ENCODE measurements at regions of chr19 and their contacts with region 1.

Region 1: GRCh38 chr19:21328885-21329605 is at the start of gene ZNF708:
- DNase-seq: peak; percentile 91
- ATAC-seq: peak; percentile 99
- H3K4me3 Mint-ChIP-seq: peak within 1 kb of the TSS; percentile 99
- H3K27ac Mint-ChIP-seq: peak within 1 kb of the TSS; percentile 99
- H3K4me1 Mint-ChIP-seq: peaks cover 28% of the 10 kb centered on the region
- H3K27me3 Mint-ChIP-seq: no peaks in the 10 kb centered on the region
- total RNA-seq, gene ZNF708: 16.4 to 17.0 TPM

Region 2: DNA sequence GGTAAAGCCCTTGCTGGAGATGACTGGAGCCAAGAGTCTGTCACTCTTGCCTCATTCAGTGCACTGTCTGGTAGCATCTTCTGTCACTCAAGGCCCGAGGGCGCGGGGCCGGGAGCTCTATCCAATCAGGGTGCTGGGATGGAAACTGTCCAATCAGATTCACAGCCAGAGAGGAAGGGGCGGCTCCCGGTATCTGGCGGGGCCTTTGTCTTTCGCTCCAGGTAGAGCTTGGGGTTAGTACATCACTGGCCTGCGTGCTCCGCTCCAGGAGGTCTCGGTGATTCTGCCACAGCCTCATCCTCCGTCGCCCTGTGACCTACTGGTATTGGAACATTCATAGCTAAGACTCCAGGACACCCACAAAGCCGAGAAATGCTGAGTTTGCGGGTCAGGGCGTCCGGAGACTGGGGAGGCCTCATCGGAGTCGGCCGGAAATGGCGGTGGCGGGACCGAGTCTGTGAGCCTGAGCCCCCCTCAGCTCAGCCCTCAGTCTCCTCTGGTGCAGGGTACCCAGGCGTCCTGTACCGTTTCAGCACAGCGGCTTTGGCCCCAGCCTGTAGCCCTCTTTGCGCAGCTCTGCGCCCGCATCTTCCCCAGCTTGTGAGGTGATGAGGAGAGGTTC is 329.2 kb before region 1 on chr19:
- CTCF ChIA-PET with region 1: no interaction called
- POLR2A ChIA-PET with region 1: interaction called, 11 read pairs
- DNase-seq: peak; percentile 94
- ATAC-seq: peak; percentile 100
- H3K4me3 Mint-ChIP-seq: peak overlapping the region; percentile 95
- H3K27ac Mint-ChIP-seq: peak overlapping the region; percentile 96
- H3K4me1 Mint-ChIP-seq: peaks cover 27% of the 10 kb centered on the region
- H3K27me3 Mint-ChIP-seq: no peaks in the 10 kb centered on the region

Region 3: GRCh38 chr19:21314676-21315075 is 14.4 kb before region 1 on chr19:
- CTCF ChIA-PET with region 1: interaction called, 4 read pairs
- POLR2A ChIA-PET with region 1: interaction called, 15 read pairs
- DNase-seq: no peak
- ATAC-seq: no peak
- H3K4me3 Mint-ChIP-seq: no peak overlapping the region
- H3K27ac Mint-ChIP-seq: no peak overlapping the region
- H3K4me1 Mint-ChIP-seq: peaks cover 17% of the 10 kb centered on the region
- H3K27me3 Mint-ChIP-seq: no peaks in the 10 kb centered on the region

Region 4: GRCh38 chr19:21358768-21359451 is 29.9 kb after region 1 on chr19 and contains the start of gene ZNF738:
- CTCF ChIA-PET with region 1: interaction called, 3 read pairs
- POLR2A ChIA-PET with region 1: interaction called, 39 read pairs
- DNase-seq: peak; percentile 93
- ATAC-seq: peak; percentile 98
- H3K4me3 Mint-ChIP-seq: peak within 1 kb of the TSS; percentile 100
- H3K27ac Mint-ChIP-seq: peak within 1 kb of the TSS; percentile 99
- H3K4me1 Mint-ChIP-seq: peaks cover 15% of the 10 kb centered on the region
- H3K27me3 Mint-ChIP-seq: no peaks in the 10 kb centered on the region
- total RNA-seq, gene ZNF738: 20.1 to 20.5 TPM

Region 5: GRCh38 chr19:21396893-21397572 is 68.0 kb after region 1 on chr19 and contains the start of gene ZNF493:
- CTCF ChIA-PET with region 1: interaction called, 4 read pairs
- POLR2A ChIA-PET with region 1: interaction called, 18 read pairs
- DNase-seq: peak; percentile 97
- ATAC-seq: peak; percentile 100
- H3K4me3 Mint-ChIP-seq: peak within 1 kb of the TSS; percentile 96
- H3K27ac Mint-ChIP-seq: peak within 1 kb of the TSS; percentile 98
- H3K4me1 Mint-ChIP-seq: peaks cover 21% of the 10 kb centered on the region
- H3K27me3 Mint-ChIP-seq: no peaks in the 10 kb centered on the region
- total RNA-seq, gene ZNF493: 20.3 to 21.6 TPM